MCF 10A (cell line): ENCODE measurements at regions of chr5 and their contacts with region 1.

Region 1: GRCh38 chr5:102778478-102778877 is 23.4 kb downstream of the PAM start:
- DNase-seq: peak; percentile 58
- H3K4me3 Mint-ChIP-seq: no peak overlapping the region
- H3K27ac Mint-ChIP-seq: peak overlapping the region; percentile 46
- H3K4me1 Mint-ChIP-seq: peaks cover 31% of the 10 kb centered on the region
- H3K27me3 Mint-ChIP-seq: no peaks in the 10 kb centered on the region
- CTCF ChIP-seq: no peak

Region 2: GRCh38 chr5:102731704-102732103 is 46.8 kb before region 1 on chr5:
- CTCF ChIA-PET with region 1: no interaction called
- POLR2A ChIA-PET with region 1: no interaction called
- intact Hi-C with region 1: no loop called
- DNase-seq: no peak
- H3K4me3 Mint-ChIP-seq: no peak overlapping the region
- H3K27ac Mint-ChIP-seq: no peak overlapping the region
- H3K4me1 Mint-ChIP-seq: no peaks in the 10 kb centered on the region
- H3K27me3 Mint-ChIP-seq: no peaks in the 10 kb centered on the region
- CTCF ChIP-seq: no peak

Region 3: GRCh38 chr5:102754767-102755431 is 23.6 kb before region 1 on chr5 and contains the start of gene PAM:
- CTCF ChIA-PET with region 1: interaction called, 24 read pairs
- POLR2A ChIA-PET with region 1: interaction called, 6 read pairs
- intact Hi-C with region 1: no loop called
- DNase-seq: peak; percentile 75
- H3K4me3 Mint-ChIP-seq: peak within 1 kb of the TSS; percentile 98
- H3K27ac Mint-ChIP-seq: peak within 1 kb of the TSS; percentile 88
- H3K4me1 Mint-ChIP-seq: peaks cover 22% of the 10 kb centered on the region
- H3K27me3 Mint-ChIP-seq: no peaks in the 10 kb centered on the region
- CTCF ChIP-seq: no peak
- total RNA-seq, gene PAM: 60.3 and 64.3 TPM in 2 replicates

Region 4: GRCh38 chr5:102799017-102799416 is 20.5 kb after region 1 on chr5:
- CTCF ChIA-PET with region 1: interaction called, 17 read pairs
- POLR2A ChIA-PET with region 1: no interaction called
- intact Hi-C with region 1: no loop called
- DNase-seq: peak; percentile 74
- H3K4me3 Mint-ChIP-seq: no peak overlapping the region
- H3K27ac Mint-ChIP-seq: no peak overlapping the region
- H3K4me1 Mint-ChIP-seq: peaks cover 11% of the 10 kb centered on the region
- H3K27me3 Mint-ChIP-seq: no peaks in the 10 kb centered on the region
- CTCF ChIP-seq: no peak

Region 5: DNA sequence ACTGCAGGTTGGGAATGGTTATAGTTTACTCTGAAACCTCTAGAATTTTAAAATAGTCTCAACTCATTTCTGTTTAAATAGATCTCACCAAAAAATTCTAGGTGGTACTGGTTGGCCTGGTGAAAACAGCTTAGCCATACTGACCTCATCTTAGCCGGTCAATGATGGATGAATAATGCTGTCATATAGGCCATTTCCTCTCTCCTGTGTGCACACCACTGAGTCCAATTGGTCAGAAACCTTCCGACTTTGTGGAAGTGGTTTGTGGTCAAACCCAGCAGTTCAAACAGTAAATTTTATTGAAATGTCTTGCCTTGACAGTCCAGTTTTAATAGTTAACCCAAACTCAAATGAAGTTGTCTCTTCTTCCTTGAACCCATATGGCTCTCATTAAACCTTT is 242.8 kb after region 1 on chr5:
- CTCF ChIA-PET with region 1: no interaction called
- POLR2A ChIA-PET with region 1: no interaction called
- intact Hi-C with region 1: loop called (anchors 5 kb)
- DNase-seq: no peak
- H3K4me3 Mint-ChIP-seq: no peak overlapping the region
- H3K27ac Mint-ChIP-seq: no peak overlapping the region
- H3K4me1 Mint-ChIP-seq: no peaks in the 10 kb centered on the region
- H3K27me3 Mint-ChIP-seq: no peaks in the 10 kb centered on the region
- CTCF ChIP-seq: no peak

Region 6: GRCh38 chr5:103139264-103139865 is 360.9 kb after region 1 on chr5:
- CTCF ChIA-PET with region 1: interaction called, 5 read pairs
- POLR2A ChIA-PET with region 1: no interaction called
- intact Hi-C with region 1: loop called (anchors 5 kb)
- DNase-seq: peak; percentile 87
- H3K4me3 Mint-ChIP-seq: no peak overlapping the region
- H3K27ac Mint-ChIP-seq: no peak overlapping the region
- H3K4me1 Mint-ChIP-seq: no peaks in the 10 kb centered on the region
- H3K27me3 Mint-ChIP-seq: no peaks in the 10 kb centered on the region
- CTCF ChIP-seq: peak; percentile 95

Region 7: GRCh38 chr5:103234239-103234975 is 455.9 kb after region 1 on chr5:
- CTCF ChIA-PET with region 1: no interaction called
- POLR2A ChIA-PET with region 1: no interaction called
- intact Hi-C with region 1: no loop called
- DNase-seq: no peak
- H3K4me3 Mint-ChIP-seq: no peak overlapping the region
- H3K27ac Mint-ChIP-seq: no peak overlapping the region
- H3K4me1 Mint-ChIP-seq: peaks cover 5% of the 10 kb centered on the region
- H3K27me3 Mint-ChIP-seq: peaks cover 14% of the 10 kb centered on the region
- CTCF ChIP-seq: no peak